Transverse colon (tissue), 4 donors: ENCODE measurements at regions of chr9 and their contacts with region 1.

Region 1: GRCh38 chr9:128523199-128523925 is 18.8 kb downstream of the GLE1 start:
- DNase-seq: no peak
- H3K4me3 ChIP-seq: no peak overlapping the region
- H3K27ac ChIP-seq: peak overlapping the region in 1 of 4 donors; percentile 12
- H3K4me1 ChIP-seq: peaks cover 0 to 5% (median 0%) of the 10 kb centered on the region in 4 donors
- H3K27me3 ChIP-seq: no peaks in the 10 kb centered on the region
- CTCF ChIP-seq: no peak
- EP300 ChIP-seq: no peak
- POLR2A ChIP-seq: no peak

Region 2: GRCh38 chr9:128677794-128678193 is 154.4 kb after region 1 on chr9:
- in situ Hi-C with region 1: no loop called
- intact Hi-C with region 1: no loop called
- DNase-seq: no peak
- H3K4me3 ChIP-seq: no peak overlapping the region
- H3K27ac ChIP-seq: no peak overlapping the region
- H3K4me1 ChIP-seq: peaks cover 0 to 5% (median under 1%) of the 10 kb centered on the region in 4 donors
- H3K27me3 ChIP-seq: no peaks in the 10 kb centered on the region
- CTCF ChIP-seq: no peak
- EP300 ChIP-seq: no peak
- POLR2A ChIP-seq: no peak

Region 3: DNA sequence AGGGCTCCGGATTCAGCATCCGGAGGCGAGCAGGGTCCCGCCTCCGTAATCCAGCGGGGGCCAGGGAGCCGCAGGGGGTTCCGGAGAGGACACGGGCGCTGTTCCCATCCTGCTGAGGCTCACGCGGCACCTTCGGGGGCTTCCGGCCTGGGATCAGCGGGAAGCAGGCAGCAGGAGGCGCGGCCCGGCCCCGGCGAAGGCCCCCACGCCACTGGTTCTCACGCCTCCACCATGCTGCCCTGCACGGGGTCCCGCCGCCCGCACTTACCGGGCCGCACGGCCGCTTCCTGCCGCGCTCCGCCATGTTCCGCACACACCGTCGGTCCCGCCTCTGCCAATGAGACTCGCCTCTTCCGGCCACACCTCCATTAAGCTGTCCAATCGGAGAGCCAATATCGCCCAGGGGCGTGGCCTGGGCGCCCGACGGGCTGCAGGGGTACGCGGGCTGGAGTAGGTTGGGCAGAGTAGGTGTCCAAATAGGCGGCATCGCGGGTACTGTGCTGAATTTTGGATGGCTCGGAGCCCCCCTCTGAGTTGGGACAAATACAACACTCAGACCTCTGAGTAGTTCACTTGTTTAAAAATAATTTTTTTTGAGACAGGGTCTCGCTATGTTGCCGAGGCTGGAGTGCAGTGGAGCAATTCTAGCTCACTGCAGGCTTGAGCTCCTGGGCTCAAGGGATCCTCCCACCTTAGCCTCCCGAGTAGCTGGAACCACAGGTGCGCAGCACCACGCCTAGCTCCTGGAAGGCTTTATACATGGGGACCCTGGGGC is 306.3 kb after region 1 on chr9 and contains the start of gene SPOUT1:
- in situ Hi-C with region 1: no loop called
- intact Hi-C with region 1: no loop called
- DNase-seq: peak; percentile 94
- H3K4me3 ChIP-seq: peak within 1 kb of the TSS; percentile 78 to 92 (median 89)
- H3K27ac ChIP-seq: peak within 1 kb of the TSS; percentile 72 to 88 (median 84)
- H3K4me1 ChIP-seq: peaks cover 6 to 18% (median 14%) of the 10 kb centered on the region in 4 donors
- H3K27me3 ChIP-seq: no peaks in the 10 kb centered on the region
- CTCF ChIP-seq: no peak
- EP300 ChIP-seq: no peak
- POLR2A ChIP-seq: peak; percentile 66
- total RNA-seq, gene SPOUT1: 19.5 to 48.3 (median 26.6) TPM

Region 4: GRCh38 chr9:128881901-128882681 is 358.7 kb after region 1 on chr9 and contains the starts of genes KYAT1 and LRRC8A:
- in situ Hi-C with region 1: no loop called
- intact Hi-C with region 1: no loop called
- DNase-seq: peak; percentile 98
- H3K4me3 ChIP-seq: peak within 1 kb of the TSS; percentile 95 to 100 (median 98)
- H3K27ac ChIP-seq: peak within 1 kb of the TSS; percentile 98 to 100 (median 98)
- H3K4me1 ChIP-seq: peaks cover 6 to 48% (median 28%) of the 10 kb centered on the region in 4 donors
- H3K27me3 ChIP-seq: no peaks in the 10 kb centered on the region
- CTCF ChIP-seq: peak in 1 of 5 experiments; percentile 21
- EP300 ChIP-seq: no peak
- POLR2A ChIP-seq: no peak
- total RNA-seq, gene KYAT1: 1.6 to 3.5 TPM in 2 of 4 donors, not detected in the others
- total RNA-seq, gene LRRC8A: 29.4 to 116 (median 35.5) TPM

Region 5: GRCh38 chr9:129776938-129777768 is 1253.8 kb after region 1 on chr9:
- in situ Hi-C with region 1: no loop called
- intact Hi-C with region 1: no loop called
- DNase-seq: peak; percentile 84
- H3K4me3 ChIP-seq: no peak overlapping the region
- H3K27ac ChIP-seq: peak overlapping the region; percentile 65 to 75 (median 72)
- H3K4me1 ChIP-seq: peaks cover 6 to 15% (median 11%) of the 10 kb centered on the region in 4 donors
- H3K27me3 ChIP-seq: no peaks in the 10 kb centered on the region
- CTCF ChIP-seq: no peak
- EP300 ChIP-seq: no peak
- POLR2A ChIP-seq: no peak

Region 6: GRCh38 chr9:129869585-129870501 is 1346.5 kb after region 1 on chr9:
- in situ Hi-C with region 1: no loop called
- intact Hi-C with region 1: loop called (anchors 5 kb)
- DNase-seq: no peak
- H3K4me3 ChIP-seq: no peak overlapping the region
- H3K27ac ChIP-seq: peak overlapping the region in 3 of 4 donors; percentile 1 to 51 (median 27)
- H3K4me1 ChIP-seq: no peaks in the 10 kb centered on the region
- H3K27me3 ChIP-seq: no peaks in the 10 kb centered on the region
- CTCF ChIP-seq: no peak
- EP300 ChIP-seq: no peak
- POLR2A ChIP-seq: no peak